ENCODE measurements at regions of chr13 and their contacts with region 1.

Region 1: GRCh38 chr13:96822895-96823294 is 171.4 kb downstream of the OXGR1 start:
- DNase-seq: peak in 1 of 2 donors; percentile 40
- H3K4me3 ChIP-seq: no peak overlapping the region
- H3K27ac ChIP-seq: peak overlapping the region; percentile 45 to 65
- H3K4me1 ChIP-seq: peaks cover 0 to 60% (median 27%) of the 10 kb centered on the region in 4 donors
- H3K27me3 ChIP-seq: no peaks in the 10 kb centered on the region
- CTCF ChIP-seq: peak; percentile 38 to 41

Region 2: GRCh38 chr13:96958286-96958891 is 135.5 kb after region 1 on chr13:
- intact Hi-C with region 1: loop called (anchors 10 kb)
- DNase-seq: no peak
- H3K4me3 ChIP-seq: no peak overlapping the region
- H3K27ac ChIP-seq: no peak overlapping the region
- H3K4me1 ChIP-seq: peaks cover 0 to 5% (median 0%) of the 10 kb centered on the region in 4 donors
- H3K27me3 ChIP-seq: no peaks in the 10 kb centered on the region
- CTCF ChIP-seq: peak; percentile 68 to 72

Region 3: DNA sequence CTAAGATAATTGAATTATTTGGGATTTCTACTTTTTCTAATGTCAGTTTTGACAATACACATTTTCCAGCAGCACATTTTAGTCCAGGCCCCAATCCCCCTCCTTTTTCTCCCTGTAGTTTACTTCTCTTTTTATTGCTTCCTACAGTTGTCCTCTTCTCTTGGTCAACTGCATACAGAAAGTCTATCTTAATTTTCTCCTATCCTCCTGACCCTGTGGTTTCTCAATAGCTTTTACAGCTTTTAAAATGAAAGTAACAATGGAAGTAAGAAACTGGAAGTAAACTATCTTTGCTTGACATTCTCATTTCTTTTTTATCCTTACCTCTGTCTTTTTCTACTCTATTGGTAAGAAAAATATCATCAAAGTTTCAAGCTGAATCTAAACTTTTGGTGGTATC is 277.9 kb after region 1 on chr13:
- intact Hi-C with region 1: loop called (anchors 5 kb)
- DNase-seq: no peak
- H3K4me3 ChIP-seq: no peak overlapping the region
- H3K27ac ChIP-seq: no peak overlapping the region
- H3K4me1 ChIP-seq: peaks cover 0 to 2% (median 0%) of the 10 kb centered on the region in 4 donors
- H3K27me3 ChIP-seq: no peaks in the 10 kb centered on the region
- CTCF ChIP-seq: no peak